CD4-positive, alpha-beta memory T cell (primary cell): ENCODE measurements at regions of chr7 and their contacts with region 1.

Region 1: DNA sequence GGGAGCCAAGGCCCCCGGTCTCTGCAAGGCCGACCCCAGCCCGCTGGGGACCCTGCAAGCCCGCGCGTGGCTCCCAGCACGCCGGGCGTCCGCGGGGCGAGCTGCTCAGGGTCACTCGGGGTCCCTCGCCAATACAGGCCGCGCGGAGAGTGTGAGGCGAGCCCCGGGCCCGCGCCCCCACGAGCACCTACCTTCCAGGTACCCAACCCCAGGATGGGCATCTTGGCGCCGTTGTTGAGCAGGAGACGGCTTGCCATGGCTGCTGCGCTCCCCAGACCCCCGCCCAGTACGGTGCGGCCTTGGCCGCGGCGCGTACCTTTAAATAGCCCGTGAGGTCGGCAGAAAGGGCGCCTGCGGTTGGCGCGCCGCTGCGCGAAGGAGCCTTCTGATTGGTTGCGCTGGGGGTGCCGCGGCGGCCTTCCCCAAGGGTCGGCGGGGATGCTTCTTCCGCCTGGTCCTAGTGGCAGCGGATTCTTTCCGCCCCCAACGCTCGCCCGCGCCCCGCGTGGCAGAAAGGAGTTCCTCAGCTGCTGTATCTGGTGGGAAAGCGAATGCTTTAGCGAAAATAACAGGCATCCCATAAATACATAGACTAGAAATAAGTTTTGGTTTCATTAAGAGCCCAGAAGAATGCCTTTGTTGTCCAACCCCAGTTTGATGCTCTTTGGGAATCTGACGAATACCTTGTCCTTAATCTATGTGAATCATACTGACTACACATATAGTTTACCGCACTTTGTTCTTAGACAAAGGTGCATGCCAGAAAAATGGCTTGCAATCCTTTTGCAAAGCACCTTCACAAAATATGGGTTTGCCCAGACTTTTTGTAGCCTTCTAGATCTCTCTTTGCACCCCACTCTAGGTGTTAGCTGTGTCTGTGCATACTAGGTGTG is at the start of gene AKR1B1:
- DNase-seq: peak; percentile 84 to 89 (median 86)
- H3K4me3 ChIP-seq: peak within 1 kb of the TSS; percentile 25 to 62
- H3K4me3 Mint-ChIP-seq: peak within 1 kb of the TSS; percentile 91 to 94 (median 92)
- H3K27ac ChIP-seq: peak within 1 kb of the TSS; percentile 55
- H3K27ac Mint-ChIP-seq: peak within 1 kb of the TSS; percentile 71 to 95 (median 88)
- H3K4me1 ChIP-seq: peaks cover 36% of the 10 kb centered on the region
- H3K4me1 Mint-ChIP-seq: peaks cover 38 to 57% (median 43%) of the 10 kb centered on the region in 4 donors
- H3K27me3 ChIP-seq: no peaks in the 10 kb centered on the region
- H3K27me3 Mint-ChIP-seq: no peaks in the 10 kb centered on the region
- total RNA-seq, gene AKR1B1: 81.2 to 91.1 TPM

Region 2: DNA sequence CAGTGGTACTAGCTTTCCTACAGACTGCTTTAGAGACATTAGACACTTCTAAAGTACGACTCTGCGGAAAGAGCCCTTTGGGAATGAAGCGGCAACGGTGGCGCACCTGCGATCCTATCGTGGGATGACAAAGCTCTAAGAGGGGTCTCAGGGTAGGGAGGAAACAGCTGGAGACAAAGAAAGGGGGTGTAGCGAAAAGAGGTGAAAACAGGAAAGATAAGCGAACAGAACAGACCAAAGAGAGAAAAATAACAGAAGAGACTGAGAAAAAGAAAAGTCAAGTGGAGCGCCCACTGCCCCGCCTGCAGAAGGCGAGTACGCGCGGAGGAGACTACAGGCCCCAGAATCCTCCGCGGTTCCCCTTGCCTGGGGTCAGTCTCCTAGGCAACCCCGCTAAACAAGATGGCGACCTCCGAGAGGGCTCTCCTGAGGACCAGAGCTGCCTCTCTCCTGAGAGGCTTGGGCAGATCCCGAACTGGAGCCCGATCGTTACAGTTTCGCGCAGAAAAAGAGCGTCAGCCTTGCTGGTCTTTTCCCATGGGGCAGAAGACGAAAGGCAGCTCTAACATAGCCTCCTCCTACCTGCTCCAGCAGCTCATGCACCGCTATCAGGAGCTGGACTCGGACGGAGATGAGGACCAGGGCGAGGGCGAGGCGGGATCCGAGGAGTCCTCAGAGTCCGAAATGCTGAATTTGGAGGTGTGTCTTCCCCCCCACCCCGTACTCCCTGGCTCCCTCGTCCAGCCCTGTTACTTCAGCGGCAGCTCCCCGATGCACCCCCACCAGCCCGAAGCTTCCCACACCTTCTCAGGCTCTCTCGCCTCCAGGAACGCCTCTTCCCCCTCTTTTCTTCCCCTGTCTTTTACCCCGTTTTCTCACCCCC is 331.8 kb before region 1 on chr7 and contains the start of gene LRGUK:
- CTCF ChIA-PET with region 1: no interaction called
- POLR2A ChIA-PET with region 1: no interaction called
- intact Hi-C with region 1: loop called (anchors 1 kb)
- DNase-seq: peak; percentile 74 to 81 (median 78)
- H3K4me3 ChIP-seq: peak within 1 kb of the TSS; percentile 50 to 78
- H3K4me3 Mint-ChIP-seq: peak within 1 kb of the TSS; percentile 83 to 95 (median 89)
- H3K27ac ChIP-seq: no peak within 1 kb of the TSS
- H3K27ac Mint-ChIP-seq: peak within 1 kb of the TSS in 6 of 7 donors; percentile 23 to 69 (median 44)
- H3K4me1 ChIP-seq: peaks cover 15% of the 10 kb centered on the region
- H3K4me1 Mint-ChIP-seq: peaks cover 13 to 21% (median 15%) of the 10 kb centered on the region in 4 donors
- H3K27me3 ChIP-seq: peaks cover 3% of the 10 kb centered on the region
- H3K27me3 Mint-ChIP-seq: peaks cover 12 to 20% of the 10 kb centered on the region in 2 donors
- total RNA-seq, gene LRGUK: 0.38 to 0.55 TPM

Region 3: DNA sequence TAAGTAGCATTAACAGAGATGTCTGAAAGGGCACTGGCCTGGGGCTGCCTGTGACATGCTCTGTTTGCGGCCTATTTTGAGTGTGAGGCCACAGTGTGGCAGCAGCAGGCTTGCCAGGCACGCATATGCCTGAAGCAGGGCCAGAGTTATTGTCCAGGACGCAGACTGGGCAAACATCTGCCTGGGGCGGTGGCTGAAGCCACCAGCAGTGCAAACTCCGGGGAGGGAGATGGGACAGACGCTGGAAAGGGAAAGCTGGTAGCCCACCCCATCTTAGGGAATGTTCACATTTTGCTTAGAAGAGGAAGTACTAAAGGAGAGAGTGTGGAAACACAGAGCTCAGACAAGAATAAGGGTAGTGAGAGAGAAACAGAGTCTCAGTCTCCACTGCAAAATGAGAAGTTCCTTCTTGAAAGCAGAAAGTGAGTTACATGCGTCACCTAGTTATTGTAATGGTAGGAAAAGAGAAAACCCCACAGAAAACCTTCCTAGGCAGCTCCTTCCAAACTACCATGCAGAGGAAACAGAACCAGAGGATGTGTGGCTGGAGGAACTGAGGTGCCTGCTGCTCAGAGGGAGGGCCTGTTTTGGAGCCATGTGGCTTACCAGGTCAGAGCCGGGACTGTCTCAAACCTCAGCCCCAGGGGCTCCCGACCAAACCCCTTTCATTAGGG is 14.7 kb before region 1 on chr7:
- CTCF ChIA-PET with region 1: interaction called, 11 read pairs
- POLR2A ChIA-PET with region 1: no interaction called
- intact Hi-C with region 1: no loop called
- DNase-seq: no peak
- H3K4me3 ChIP-seq: no peak overlapping the region
- H3K4me3 Mint-ChIP-seq: no peak overlapping the region
- H3K27ac ChIP-seq: no peak overlapping the region
- H3K27ac Mint-ChIP-seq: peak overlapping the region in 1 of 7 donors; percentile 59
- H3K4me1 ChIP-seq: no peaks in the 10 kb centered on the region
- H3K4me1 Mint-ChIP-seq: no peaks in the 10 kb centered on the region
- H3K27me3 ChIP-seq: no peaks in the 10 kb centered on the region
- H3K27me3 Mint-ChIP-seq: no peaks in the 10 kb centered on the region

Region 4: DNA sequence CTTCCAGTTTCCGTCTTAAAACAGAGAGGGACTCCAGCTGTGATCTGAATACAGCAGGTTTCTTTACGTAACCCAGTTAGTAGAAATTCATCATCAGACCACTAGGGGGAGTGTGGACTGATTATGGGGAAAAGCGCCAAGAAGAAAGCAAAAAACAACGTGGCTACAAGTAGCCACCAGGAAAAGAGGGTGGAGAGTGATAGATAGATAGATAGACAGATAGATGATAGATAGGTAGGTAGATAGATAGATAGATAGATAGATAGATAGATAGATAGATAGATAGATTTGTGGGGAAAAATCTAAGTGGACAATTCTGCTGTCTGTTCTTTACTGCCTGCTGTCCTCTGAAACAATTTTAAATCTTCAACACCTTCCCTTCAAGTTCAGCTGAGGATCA is 55.6 kb after region 1 on chr7:
- CTCF ChIA-PET with region 1: interaction called, 38 read pairs
- POLR2A ChIA-PET with region 1: interaction called, 5 read pairs
- intact Hi-C with region 1: no loop called
- DNase-seq: peak in 4 of 5 donors; percentile 45 to 60 (median 55)
- H3K4me3 ChIP-seq: no peak overlapping the region
- H3K4me3 Mint-ChIP-seq: peak overlapping the region in 1 of 8 donors; percentile 63
- H3K27ac ChIP-seq: no peak overlapping the region
- H3K27ac Mint-ChIP-seq: no peak overlapping the region
- H3K4me1 ChIP-seq: no peaks in the 10 kb centered on the region
- H3K4me1 Mint-ChIP-seq: peaks cover 0 to 5% (median 3%) of the 10 kb centered on the region in 4 donors
- H3K27me3 ChIP-seq: no peaks in the 10 kb centered on the region
- H3K27me3 Mint-ChIP-seq: peaks cover 4 to 21% of the 10 kb centered on the region in 2 donors